IMR-90 (cell line): ENCODE measurements at regions of chr2 and their contacts with region 1.

Region 1: DNA sequence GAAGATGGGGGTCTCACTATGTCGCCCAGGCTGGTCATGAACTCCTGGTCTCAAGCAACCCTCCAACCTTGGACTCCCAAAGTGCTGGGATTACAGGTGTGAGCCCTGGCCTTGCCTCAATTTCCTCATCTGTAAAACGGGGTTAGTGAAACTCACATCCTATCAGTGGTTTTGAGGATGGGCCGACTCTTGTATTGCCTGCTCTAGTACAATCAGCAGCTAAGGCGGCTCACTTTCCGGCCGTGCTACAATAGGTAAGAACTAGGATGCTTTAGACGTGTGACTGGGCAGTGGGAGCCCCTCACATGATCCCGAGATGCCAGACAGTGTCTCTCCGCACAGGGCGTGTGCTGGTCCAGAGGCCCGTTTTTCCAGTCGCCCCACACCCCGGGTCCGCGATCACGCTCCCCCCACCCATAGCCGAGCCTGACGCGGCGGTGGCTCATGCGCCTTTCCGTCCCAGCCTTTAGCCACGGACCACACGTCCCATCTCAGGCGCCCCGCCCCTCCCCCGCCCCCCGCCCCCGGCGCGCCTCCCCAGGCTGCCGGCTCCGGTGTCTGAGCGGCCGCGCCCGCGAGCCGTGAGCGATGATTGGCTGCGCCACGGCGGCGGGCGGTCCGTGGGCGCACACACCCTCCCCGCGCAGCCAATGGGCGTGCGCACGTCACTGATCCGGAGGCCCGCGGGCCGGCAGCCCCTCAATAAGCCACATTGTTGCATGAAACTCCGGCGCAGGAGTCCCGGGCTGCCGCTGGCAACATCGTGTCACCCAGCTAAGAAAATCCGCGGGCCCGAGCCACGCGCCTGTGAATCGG is at the start of gene HK2:
- DNase-seq: peak; percentile 88
- ATAC-seq: peak; percentile 92
- H3K4me3 ChIP-seq: peak within 1 kb of the TSS; percentile 97
- H3K27ac ChIP-seq: peak within 1 kb of the TSS; percentile 87
- H3K4me1 ChIP-seq: peaks cover 18% of the 10 kb centered on the region
- H3K27me3 ChIP-seq: no peaks in the 10 kb centered on the region
- CTCF ChIP-seq: no peak
- POLR2A ChIP-seq: peak; percentile 89
- RAD21 ChIP-seq: no peak
- total RNA-seq, gene HK2: 17.4 and 17.8 TPM in 2 replicates

Region 2: DNA sequence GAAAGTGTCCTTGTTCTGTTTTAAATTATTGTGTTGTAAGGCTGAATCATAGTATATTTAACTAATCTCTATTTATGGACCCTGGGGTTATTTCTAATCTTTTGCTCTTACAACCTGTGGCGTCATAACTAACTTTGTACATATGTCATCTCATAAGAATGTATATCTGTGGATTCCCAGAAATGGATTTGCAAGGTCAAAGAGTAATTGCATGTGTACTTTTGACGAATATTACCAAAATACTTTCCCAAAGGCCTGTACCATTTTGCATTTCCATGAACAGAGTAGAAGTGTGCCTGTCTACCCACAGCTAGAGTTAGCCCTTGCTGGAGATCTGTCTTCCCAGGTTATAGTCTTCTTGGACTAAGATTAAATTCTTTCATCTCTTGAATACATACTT is 136.8 kb before region 1 on chr2:
- CTCF ChIA-PET with region 1: interaction called, 3 read pairs
- POLR2A ChIA-PET with region 1: no interaction called
- dilution Hi-C with region 1: no loop called
- in situ Hi-C with region 1: no loop called
- intact Hi-C with region 1: loop called (anchors 5 kb)
- DNase-seq: peak; percentile 94
- ATAC-seq: peak; percentile 74
- H3K4me3 ChIP-seq: no peak overlapping the region
- H3K27ac ChIP-seq: peak overlapping the region; percentile 93; the same call in 1 of the 2 replicates
- H3K4me1 ChIP-seq: peaks cover 18% of the 10 kb centered on the region
- H3K27me3 ChIP-seq: peaks cover 2% of the 10 kb centered on the region; the same call in 1 of the 2 replicates
- CTCF ChIP-seq: no peak
- POLR2A ChIP-seq: no peak
- RAD21 ChIP-seq: no peak

Region 3: DNA sequence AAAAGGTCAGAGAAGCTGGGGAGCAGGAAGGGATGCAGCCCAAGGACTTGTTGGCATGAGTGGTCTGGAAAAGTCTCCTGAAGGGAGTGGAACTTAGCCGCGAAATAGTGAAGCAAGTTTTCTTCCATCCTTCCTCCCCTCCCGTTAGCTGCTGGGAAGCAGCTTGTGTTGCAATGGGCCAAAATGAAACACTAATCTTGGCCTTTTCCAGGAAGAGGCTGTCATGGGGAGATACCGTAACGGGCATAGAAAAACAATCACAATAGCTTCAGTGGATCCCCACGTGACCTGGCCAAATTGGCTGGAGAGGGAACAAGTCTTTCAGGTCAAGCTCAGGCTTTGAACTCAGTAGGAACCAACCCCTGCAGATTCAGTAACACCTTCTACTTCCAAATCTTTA is 130.3 kb before region 1 on chr2:
- CTCF ChIA-PET with region 1: interaction called, 4 read pairs
- POLR2A ChIA-PET with region 1: interaction called, 10 read pairs
- dilution Hi-C with region 1: no loop called
- in situ Hi-C with region 1: no loop called
- intact Hi-C with region 1: loop called (anchors 5 kb)
- DNase-seq: no peak
- ATAC-seq: no peak
- H3K4me3 ChIP-seq: no peak overlapping the region
- H3K27ac ChIP-seq: no peak overlapping the region
- H3K4me1 ChIP-seq: peaks cover 2% of the 10 kb centered on the region
- H3K27me3 ChIP-seq: peaks cover 2% of the 10 kb centered on the region
- CTCF ChIP-seq: no peak
- POLR2A ChIP-seq: no peak
- RAD21 ChIP-seq: no peak

Region 4: GRCh38 chr2:74715078-74715791 is 118.4 kb before region 1 on chr2:
- CTCF ChIA-PET with region 1: interaction called, 4 read pairs
- POLR2A ChIA-PET with region 1: interaction called, 3 read pairs
- dilution Hi-C with region 1: no loop called
- in situ Hi-C with region 1: no loop called
- intact Hi-C with region 1: loop called (anchors 1 kb)
- DNase-seq: peak; percentile 72
- ATAC-seq: peak; percentile 97
- H3K4me3 ChIP-seq: peak overlapping the region; percentile 44
- H3K27ac ChIP-seq: peak overlapping the region; percentile 55; the same call in 1 of the 2 replicates
- H3K4me1 ChIP-seq: 0 out of 2 replicates have a peak, but pooled peaks cover 2% of the 10 kb centered on the region
- H3K27me3 ChIP-seq: peaks cover 8% of the 10 kb centered on the region
- CTCF ChIP-seq: peak; percentile 93
- POLR2A ChIP-seq: no peak
- RAD21 ChIP-seq: peak; percentile 81

Region 5: GRCh38 chr2:74740389-74741075 is 93.1 kb before region 1 on chr2:
- CTCF ChIA-PET with region 1: interaction called, 6 read pairs
- POLR2A ChIA-PET with region 1: no interaction called
- dilution Hi-C with region 1: no loop called
- in situ Hi-C with region 1: no loop called
- intact Hi-C with region 1: loop called (anchors 10 kb)
- DNase-seq: peak; percentile 96
- ATAC-seq: peak; percentile 94
- H3K4me3 ChIP-seq: no peak overlapping the region
- H3K27ac ChIP-seq: peak overlapping the region; percentile 43
- H3K4me1 ChIP-seq: peaks cover 17% of the 10 kb centered on the region
- H3K27me3 ChIP-seq: no peaks in the 10 kb centered on the region
- CTCF ChIP-seq: 0 out of 2 replicates have a peak, but pooled peaks have one; percentile 16
- POLR2A ChIP-seq: no peak
- RAD21 ChIP-seq: peak; percentile 30; the same call in 1 of the 2 replicates

Region 6: GRCh38 chr2:74764429-74765272 is 69.0 kb before region 1 on chr2:
- CTCF ChIA-PET with region 1: interaction called, 5 read pairs
- POLR2A ChIA-PET with region 1: no interaction called
- dilution Hi-C with region 1: no loop called
- in situ Hi-C with region 1: no loop called
- intact Hi-C with region 1: loop called (anchors 2 kb)
- DNase-seq: peak; percentile 60
- ATAC-seq: peak; percentile 56
- H3K4me3 ChIP-seq: no peak overlapping the region
- H3K27ac ChIP-seq: peak overlapping the region; percentile 1; the same call in 1 of the 2 replicates
- H3K4me1 ChIP-seq: peaks cover 28% of the 10 kb centered on the region
- H3K27me3 ChIP-seq: no peaks in the 10 kb centered on the region
- CTCF ChIP-seq: no peak
- POLR2A ChIP-seq: no peak
- RAD21 ChIP-seq: no peak

Region 7: GRCh38 chr2:74876081-74876886 is 42.7 kb after region 1 on chr2:
- CTCF ChIA-PET with region 1: interaction called, 5 read pairs
- POLR2A ChIA-PET with region 1: no interaction called
- dilution Hi-C with region 1: no loop called
- in situ Hi-C with region 1: no loop called
- intact Hi-C with region 1: loop called (anchors 1 kb)
- DNase-seq: peak; percentile 46
- ATAC-seq: peak; percentile 78
- H3K4me3 ChIP-seq: no peak overlapping the region
- H3K27ac ChIP-seq: peak overlapping the region; percentile 19; the same call in 1 of the 2 replicates
- H3K4me1 ChIP-seq: peaks cover 16% of the 10 kb centered on the region
- H3K27me3 ChIP-seq: no peaks in the 10 kb centered on the region
- CTCF ChIP-seq: peak; percentile 73
- POLR2A ChIP-seq: no peak
- RAD21 ChIP-seq: peak; percentile 73